ENCODE measurements at regions of chr13 and their contacts with region 1.

Region 1: DNA sequence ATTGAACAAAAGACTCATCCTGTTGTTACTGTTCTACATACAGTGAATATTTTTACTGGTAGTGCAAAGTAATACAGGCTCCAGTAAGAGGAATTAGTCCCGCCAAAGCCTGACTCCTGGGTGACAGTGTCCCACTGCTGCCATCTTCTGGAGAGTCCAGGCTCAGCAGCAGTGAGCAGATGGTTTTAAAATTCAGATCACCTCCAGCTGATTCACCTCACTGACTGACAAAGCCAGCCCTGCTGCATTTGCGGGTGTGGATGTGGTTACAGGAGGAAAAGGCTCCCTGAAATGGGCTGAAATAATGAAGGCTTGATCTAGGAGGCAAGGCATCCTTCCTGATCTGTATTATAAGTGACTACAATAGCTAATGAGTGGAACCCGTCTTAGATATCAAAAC is 18.3 kb downstream of the PABPC3 start:
- DNase-seq: peak; percentile 75
- H3K4me3 ChIP-seq: no peak overlapping the region
- H3K27ac ChIP-seq: no peak overlapping the region
- H3K4me1 ChIP-seq: peaks cover 10% of the 10 kb centered on the region
- H3K27me3 ChIP-seq: peaks cover 5% of the 10 kb centered on the region
- CTCF ChIP-seq: peak; percentile 91 to 98

Region 2: GRCh38 chr13:24931450-24932251 is 182.6 kb before region 1 on chr13:
- CTCF ChIA-PET with region 1: no interaction called
- dilution Hi-C with region 1: no loop called
- in situ Hi-C with region 1: no loop called
- intact Hi-C with region 1: no loop called
- DNase-seq: no peak
- H3K4me3 ChIP-seq: no peak overlapping the region
- H3K27ac ChIP-seq: no peak overlapping the region
- H3K4me1 ChIP-seq: no peaks in the 10 kb centered on the region
- H3K27me3 ChIP-seq: peaks cover 8% of the 10 kb centered on the region
- CTCF ChIP-seq: no peak

Region 3: DNA sequence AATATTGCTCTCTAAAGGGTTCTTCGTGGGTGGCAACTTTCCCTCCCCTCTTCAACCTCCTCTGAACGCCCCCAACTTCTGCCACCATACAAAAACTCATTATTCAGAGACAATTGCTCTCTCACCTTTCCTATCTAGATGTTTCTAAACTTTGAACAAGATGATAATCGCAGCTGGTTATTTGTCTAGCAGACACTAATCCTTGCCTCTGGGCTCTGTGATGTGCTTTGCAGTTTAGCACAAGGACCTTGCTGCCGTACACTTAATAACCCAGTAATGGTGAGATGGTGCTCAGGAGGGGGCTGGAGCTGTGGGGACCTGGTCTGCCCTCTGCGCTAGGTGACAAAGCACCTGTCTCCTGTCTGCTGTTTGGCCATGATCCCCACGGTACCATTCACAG is 126.8 kb before region 1 on chr13:
- CTCF ChIA-PET with region 1: no interaction called
- dilution Hi-C with region 1: no loop called
- in situ Hi-C with region 1: no loop called
- intact Hi-C with region 1: no loop called
- DNase-seq: no peak
- H3K4me3 ChIP-seq: no peak overlapping the region
- H3K27ac ChIP-seq: no peak overlapping the region
- H3K4me1 ChIP-seq: no peaks in the 10 kb centered on the region
- H3K27me3 ChIP-seq: peaks cover 16% of the 10 kb centered on the region
- CTCF ChIP-seq: no peak

Region 4: GRCh38 chr13:25001476-25002206 is 112.6 kb before region 1 on chr13:
- CTCF ChIA-PET with region 1: no interaction called
- dilution Hi-C with region 1: no loop called
- in situ Hi-C with region 1: no loop called
- intact Hi-C with region 1: loop called (anchors 2 kb)
- DNase-seq: no peak
- H3K4me3 ChIP-seq: no peak overlapping the region
- H3K27ac ChIP-seq: no peak overlapping the region
- H3K4me1 ChIP-seq: peaks cover 11% of the 10 kb centered on the region
- H3K27me3 ChIP-seq: no peaks in the 10 kb centered on the region
- CTCF ChIP-seq: no peak

Region 5: GRCh38 chr13:25085125-25085742 is 29.0 kb before region 1 on chr13:
- CTCF ChIA-PET with region 1: no interaction called
- dilution Hi-C with region 1: no loop called
- in situ Hi-C with region 1: no loop called
- intact Hi-C with region 1: loop called (anchors 1 kb)
- DNase-seq: peak; percentile 38
- H3K4me3 ChIP-seq: no peak overlapping the region
- H3K27ac ChIP-seq: no peak overlapping the region
- H3K4me1 ChIP-seq: no peaks in the 10 kb centered on the region
- H3K27me3 ChIP-seq: peaks cover 3% of the 10 kb centered on the region
- CTCF ChIP-seq: peak; percentile 64 to 79

Region 6: GRCh38 chr13:25249001-25249543 is 134.9 kb after region 1 on chr13:
- CTCF ChIA-PET with region 1: no interaction called
- dilution Hi-C with region 1: no loop called
- in situ Hi-C with region 1: no loop called
- intact Hi-C with region 1: no loop called
- DNase-seq: peak; percentile 49
- H3K4me3 ChIP-seq: no peak overlapping the region
- H3K27ac ChIP-seq: no peak overlapping the region
- H3K4me1 ChIP-seq: peaks cover 4% of the 10 kb centered on the region
- H3K27me3 ChIP-seq: no peaks in the 10 kb centered on the region
- CTCF ChIP-seq: peak; percentile 25 to 43

Region 7: DNA sequence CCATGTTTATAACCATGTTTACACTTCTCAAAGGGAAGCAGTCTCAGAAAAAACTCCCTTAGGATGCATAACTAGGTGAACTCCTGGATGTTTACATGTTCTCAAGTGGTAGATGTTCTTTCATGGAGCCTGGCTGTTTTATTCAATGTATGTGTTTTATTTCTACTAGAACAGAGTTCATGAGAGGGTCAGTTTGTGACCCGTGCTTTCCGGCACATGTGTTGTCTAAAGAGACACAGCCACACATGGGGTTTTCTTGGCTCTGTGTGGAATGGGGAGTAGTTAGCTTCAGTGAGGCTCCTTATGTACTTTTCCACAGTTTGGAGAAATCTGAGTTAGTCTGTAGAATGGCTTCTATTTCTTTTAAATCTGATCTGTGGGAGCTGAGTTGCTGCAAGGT is 318.5 kb after region 1 on chr13:
- CTCF ChIA-PET with region 1: interaction called, 11 read pairs
- dilution Hi-C with region 1: no loop called
- in situ Hi-C with region 1: no loop called
- intact Hi-C with region 1: no loop called
- DNase-seq: no peak
- H3K4me3 ChIP-seq: no peak overlapping the region
- H3K27ac ChIP-seq: no peak overlapping the region
- H3K4me1 ChIP-seq: no peaks in the 10 kb centered on the region
- H3K27me3 ChIP-seq: no peaks in the 10 kb centered on the region
- CTCF ChIP-seq: no peak